ENCODE measurements at regions of chr7 and their contacts with region 1.

Region 1: GRCh38 chr7:105759670-105760550 is 116.5 kb downstream of the ATXN7L1 start:
- H3K4me3 Mint-ChIP-seq: no peak overlapping the region
- H3K27ac Mint-ChIP-seq: no peak overlapping the region
- H3K4me1 Mint-ChIP-seq: no peaks in the 10 kb centered on the region
- H3K27me3 Mint-ChIP-seq: no peaks in the 10 kb centered on the region

Region 2: GRCh38 chr7:105652359-105652993 is 107.4 kb before region 1 on chr7:
- intact Hi-C with region 1: loop called (anchors 10 kb)
- H3K4me3 Mint-ChIP-seq: no peak overlapping the region
- H3K27ac Mint-ChIP-seq: no peak overlapping the region
- H3K4me1 Mint-ChIP-seq: peaks cover 16% of the 10 kb centered on the region
- H3K27me3 Mint-ChIP-seq: no peaks in the 10 kb centered on the region

Region 3: DNA sequence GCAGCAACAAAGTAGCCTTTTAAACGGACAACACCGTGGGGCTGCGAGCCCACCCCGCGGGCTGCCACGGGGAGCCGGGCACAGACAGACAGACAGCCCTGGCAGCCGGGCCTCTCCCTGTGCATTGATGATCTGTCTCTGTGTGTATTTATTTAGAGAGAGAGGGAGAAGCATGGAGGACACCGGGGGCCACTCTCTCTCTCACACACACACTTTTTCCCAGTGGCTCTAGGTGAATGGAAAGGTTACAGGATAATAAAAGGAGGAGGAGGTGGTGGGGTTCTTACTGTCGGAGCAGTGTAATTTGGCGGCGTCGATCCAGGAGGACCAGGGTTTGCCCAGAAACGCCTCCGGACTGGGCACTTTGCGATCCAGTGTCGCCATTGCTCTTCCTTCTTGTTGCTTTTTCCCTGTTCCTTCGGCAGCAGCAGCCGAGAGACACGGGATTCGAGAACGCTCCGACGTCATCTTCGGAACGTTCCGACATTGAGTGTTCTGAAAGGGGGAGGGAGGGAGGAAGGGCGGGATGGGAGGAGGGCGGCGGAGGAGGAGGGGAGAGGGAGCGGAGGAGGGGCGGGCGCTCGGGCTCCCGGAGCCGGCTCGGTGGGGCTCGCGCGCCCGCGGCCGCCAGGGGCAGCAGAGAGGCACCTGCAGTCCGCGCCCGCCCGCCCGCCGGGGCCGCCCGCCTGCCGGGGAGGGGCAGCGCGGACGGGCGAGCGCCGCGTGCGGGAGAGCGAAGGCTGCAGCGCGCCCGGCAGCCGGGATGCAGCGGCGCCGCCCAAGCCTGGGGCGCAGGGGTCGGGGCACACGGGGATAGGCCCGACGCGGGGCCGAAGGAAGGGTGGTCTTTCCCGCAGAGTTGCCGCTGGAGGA is 116.4 kb after region 1 on chr7 and contains the start of gene ATXN7L1:
- intact Hi-C with region 1: loop called (anchors 10 kb)
- H3K4me3 Mint-ChIP-seq: peak within 1 kb of the TSS; percentile 88
- H3K27ac Mint-ChIP-seq: peak within 1 kb of the TSS; percentile 97
- H3K4me1 Mint-ChIP-seq: peaks cover 33% of the 10 kb centered on the region
- H3K27me3 Mint-ChIP-seq: peaks cover 34% of the 10 kb centered on the region

Region 4: DNA sequence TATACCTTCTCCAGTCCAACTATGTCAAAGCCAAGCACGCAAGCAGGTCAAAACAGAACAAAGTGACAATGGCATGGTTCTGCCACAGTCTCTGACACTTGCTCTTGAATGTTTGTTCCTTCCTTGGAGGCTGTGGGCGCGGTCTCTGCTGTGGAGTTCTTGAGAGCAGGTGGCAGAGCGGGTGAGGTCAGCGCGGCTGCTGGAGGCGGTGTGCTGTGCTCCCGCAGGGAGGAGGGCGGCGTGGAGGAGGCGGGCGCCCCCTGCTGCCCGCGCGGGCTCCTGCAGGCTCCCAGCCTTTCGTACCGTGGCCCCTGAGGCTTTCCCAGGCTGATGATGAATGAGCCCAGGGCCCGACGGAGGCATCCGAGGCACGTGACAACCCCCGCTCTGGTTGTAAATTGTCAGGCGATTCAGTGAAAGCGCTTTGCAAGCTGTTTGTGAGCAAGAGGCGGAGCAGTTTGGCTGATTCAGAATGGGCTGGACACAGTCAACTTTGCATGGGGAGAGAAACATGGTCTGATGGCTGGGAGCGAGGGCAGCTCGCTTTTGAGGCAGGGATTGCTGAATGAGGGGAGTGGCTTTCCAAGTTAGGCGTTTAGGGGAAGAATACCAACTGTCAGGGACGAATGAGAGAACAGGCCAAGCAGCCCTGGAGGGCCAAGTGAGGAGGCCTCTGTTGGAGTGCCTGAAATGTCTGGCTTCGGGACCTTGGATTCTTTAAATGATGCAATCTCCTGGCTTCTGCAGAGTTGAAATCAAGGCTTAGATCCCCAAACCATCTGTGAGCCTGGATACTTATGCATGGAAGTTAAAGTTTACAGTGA is 249.7 kb after region 1 on chr7:
- intact Hi-C with region 1: loop called (anchors 1 kb)
- H3K4me3 Mint-ChIP-seq: peak overlapping the region; percentile 38
- H3K27ac Mint-ChIP-seq: no peak overlapping the region
- H3K4me1 Mint-ChIP-seq: peaks cover 14% of the 10 kb centered on the region
- H3K27me3 Mint-ChIP-seq: peaks cover 48% of the 10 kb centered on the region

Region 5: DNA sequence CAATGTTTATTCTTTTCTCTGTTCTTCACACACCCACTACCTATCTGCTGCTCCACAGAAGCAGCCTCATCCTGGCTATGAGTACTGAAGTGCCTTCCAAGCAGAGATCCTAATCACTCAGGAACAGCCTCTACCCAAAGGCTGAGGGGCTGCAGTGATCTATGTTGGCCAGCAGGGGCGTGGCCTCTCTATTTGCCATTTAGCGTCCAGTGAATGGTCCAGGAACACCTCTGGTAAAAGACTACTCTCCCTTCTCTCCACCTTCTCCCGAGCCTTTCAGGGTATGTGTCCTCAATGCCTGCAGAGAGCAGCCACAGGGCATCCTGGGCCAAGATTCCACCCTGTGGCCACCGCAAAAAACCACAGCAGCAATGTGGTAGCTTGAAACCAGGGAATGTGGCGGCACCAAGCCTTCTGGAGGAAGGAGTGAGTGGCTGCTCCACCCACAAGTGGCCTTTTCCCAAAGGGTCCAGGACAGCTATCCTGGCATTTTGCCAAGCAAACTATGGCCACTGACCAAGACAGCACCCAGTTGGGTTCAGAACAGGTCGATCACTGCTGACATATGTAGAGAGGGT is 281.3 kb after region 1 on chr7:
- intact Hi-C with region 1: loop called (anchors 1 kb)
- H3K4me3 Mint-ChIP-seq: no peak overlapping the region
- H3K27ac Mint-ChIP-seq: no peak overlapping the region
- H3K4me1 Mint-ChIP-seq: peaks cover 16% of the 10 kb centered on the region
- H3K27me3 Mint-ChIP-seq: peaks cover 45% of the 10 kb centered on the region

Region 6: DNA sequence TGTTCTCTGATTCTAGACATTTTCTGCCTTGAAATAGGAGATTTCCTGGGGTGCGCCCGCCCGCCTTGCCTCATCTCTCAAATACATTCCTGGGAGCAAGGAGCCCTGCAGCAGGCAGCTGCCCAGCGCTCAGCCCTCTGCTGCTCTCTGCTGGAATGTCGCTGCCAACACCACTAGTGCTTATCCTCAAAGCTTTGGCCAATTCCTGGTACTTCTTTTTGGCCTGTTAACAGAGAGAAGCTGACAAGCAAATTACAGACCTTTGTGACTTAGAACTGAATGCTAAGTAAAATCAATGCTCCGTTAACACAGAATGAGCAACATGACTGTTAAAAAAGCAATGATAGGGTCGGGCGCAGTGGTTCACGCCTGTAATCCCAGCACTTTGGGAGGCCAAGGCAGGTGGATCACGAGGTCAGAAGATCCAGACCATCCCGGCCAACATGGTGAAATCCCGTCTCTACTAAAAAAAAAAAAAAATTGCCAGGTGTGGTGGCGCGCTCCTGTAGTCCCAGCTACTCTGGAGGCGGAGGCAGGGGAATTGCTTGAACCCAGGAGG is 394.1 kb after region 1 on chr7:
- intact Hi-C with region 1: loop called (anchors 10 kb)
- H3K4me3 Mint-ChIP-seq: no peak overlapping the region
- H3K27ac Mint-ChIP-seq: no peak overlapping the region
- H3K4me1 Mint-ChIP-seq: peaks cover 9% of the 10 kb centered on the region
- H3K27me3 Mint-ChIP-seq: peaks cover 69% of the 10 kb centered on the region

Measured in dendritic cell treated with granulocyte-macrophage colony-stimulating factor and Interleukin-4, amounts not matched to agents 40 ng/mL and 50 ng/mL, for 4 days (primary cell).